GM12878 (cell line): ENCODE measurements at regions of chr7 and their contacts with region 1.

Region 1: DNA sequence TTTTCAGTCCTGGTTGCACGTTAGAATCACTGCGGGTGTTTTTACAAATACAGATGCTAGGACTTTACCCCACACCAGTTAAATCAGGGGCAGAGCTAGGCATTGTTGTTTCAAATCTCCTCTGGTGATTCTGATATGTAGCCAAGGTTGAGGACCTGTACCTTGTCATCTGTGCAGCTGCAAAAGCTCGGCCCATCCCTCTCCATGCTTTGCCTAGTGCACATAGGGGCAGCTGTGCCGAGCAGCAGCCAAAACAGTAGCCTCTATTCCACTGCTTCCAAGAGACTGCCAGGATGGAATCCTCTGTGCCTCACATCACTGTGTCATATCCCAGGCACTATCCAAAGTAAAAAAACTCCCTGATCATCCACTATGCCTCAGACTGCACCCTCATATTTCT is 181.3 kb downstream of the CDK14 start:
- DNase-seq: no peak
- ATAC-seq: peak; percentile 63
- H3K4me3 ChIP-seq: peak overlapping the region; percentile 65; the same call in 1 of the 2 replicates
- H3K27ac ChIP-seq: peak overlapping the region; percentile 77
- H3K4me1 ChIP-seq: peaks cover 35% of the 10 kb centered on the region
- H3K27me3 ChIP-seq: no peaks in the 10 kb centered on the region
- CTCF ChIP-seq: no peak
- EP300 ChIP-seq: no peak
- POLR2A ChIP-seq: no peak
- RAD21 ChIP-seq: no peak

Region 2: GRCh38 chr7:90677486-90678404 is 99.7 kb before region 1 on chr7:
- CTCF ChIA-PET with region 1: no interaction called
- POLR2A ChIA-PET with region 1: no interaction called
- RAD21 ChIA-PET with region 1: no interaction called
- SMC1A ChIA-PET with region 1: no interaction called
- in situ Hi-C with region 1: no loop called
- intact Hi-C with region 1: no loop called
- DNase-seq: no peak
- ATAC-seq: no peak; the same call in 2 of the 3 replicates
- H3K4me3 ChIP-seq: no peak overlapping the region
- H3K27ac ChIP-seq: no peak overlapping the region
- H3K4me1 ChIP-seq: no peaks in the 10 kb centered on the region
- H3K27me3 ChIP-seq: no peaks in the 10 kb centered on the region
- CTCF ChIP-seq: no peak
- EP300 ChIP-seq: no peak
- POLR2A ChIP-seq: no peak
- RAD21 ChIP-seq: no peak

Region 3: GRCh38 chr7:90766814-90767564 is 10.5 kb before region 1 on chr7:
- CTCF ChIA-PET with region 1: interaction called, 7 read pairs
- POLR2A ChIA-PET with region 1: interaction called, 5 read pairs
- RAD21 ChIA-PET with region 1: interaction called, 10 read pairs
- SMC1A ChIA-PET with region 1: interaction called, 24 read pairs
- in situ Hi-C with region 1: no loop called
- intact Hi-C with region 1: no loop called
- DNase-seq: no peak
- ATAC-seq: no peak; the same call in 2 of the 3 replicates
- H3K4me3 ChIP-seq: no peak overlapping the region
- H3K27ac ChIP-seq: no peak overlapping the region
- H3K4me1 ChIP-seq: no peaks in the 10 kb centered on the region
- H3K27me3 ChIP-seq: no peaks in the 10 kb centered on the region
- CTCF ChIP-seq: no peak
- EP300 ChIP-seq: no peak
- POLR2A ChIP-seq: no peak
- RAD21 ChIP-seq: no peak